Activated T-helper 2 cell treated with anti-CD3 and anti-CD28 coated beads, Interferon-gamma antibody, Interleukin-2, Interleukin-4, amounts not matched to agents 10 μg/mL and 5 μg/mL and 100 μg/mL, durations not matched to agents 14 hours and 24 hours and 36 hours (primary cell): ENCODE measurements at regions of chr2 and their contacts with region 1.

Region 1: GRCh38 chr2:135741395-135742324 is at the start of gene UBXN4:
- DNase-seq: peak; percentile 90
- H3K4me3 Mint-ChIP-seq: peak within 1 kb of the TSS; percentile 98
- H3K27ac Mint-ChIP-seq: peak within 1 kb of the TSS; percentile 100
- H3K4me1 Mint-ChIP-seq: peaks cover 34% of the 10 kb centered on the region
- H3K27me3 Mint-ChIP-seq: no peaks in the 10 kb centered on the region
- total RNA-seq, gene UBXN4: 118 and 138 TPM in 2 replicates

Region 2: GRCh38 chr2:135797497-135798274 is 56.0 kb after region 1 on chr2:
- intact Hi-C with region 1: loop called (anchors 5 kb)
- DNase-seq: peak; percentile 67
- H3K4me3 Mint-ChIP-seq: no peak overlapping the region
- H3K27ac Mint-ChIP-seq: no peak overlapping the region
- H3K4me1 Mint-ChIP-seq: peaks cover 21% of the 10 kb centered on the region
- H3K27me3 Mint-ChIP-seq: no peaks in the 10 kb centered on the region

Region 3: GRCh38 chr2:135820003-135820618 is 78.5 kb after region 1 on chr2:
- intact Hi-C with region 1: loop called (anchors 1 kb)
- DNase-seq: peak; percentile 80
- H3K4me3 Mint-ChIP-seq: peak overlapping the region; percentile 71
- H3K27ac Mint-ChIP-seq: peak overlapping the region; percentile 87
- H3K4me1 Mint-ChIP-seq: peaks cover 39% of the 10 kb centered on the region
- H3K27me3 Mint-ChIP-seq: no peaks in the 10 kb centered on the region

Region 4: GRCh38 chr2:135876066-135876711 is 134.5 kb after region 1 on chr2 and contains the start of gene MCM6:
- intact Hi-C with region 1: loop called (anchors 5 kb)
- DNase-seq: peak; percentile 98
- H3K4me3 Mint-ChIP-seq: peak within 1 kb of the TSS; percentile 95
- H3K27ac Mint-ChIP-seq: peak within 1 kb of the TSS; percentile 92
- H3K4me1 Mint-ChIP-seq: peaks cover 37% of the 10 kb centered on the region
- H3K27me3 Mint-ChIP-seq: no peaks in the 10 kb centered on the region
- total RNA-seq, gene MCM6: 190 and 191 TPM in 2 replicates